ENCODE measurements at regions of chr16 and their contacts with region 1.

Region 1: GRCh38 chr16:23877107-23878090 is 41.6 kb downstream of the PRKCB start:
- DNase-seq: no peak
- ATAC-seq: no peak
- H3K4me3 Mint-ChIP-seq: no peak overlapping the region
- H3K27ac Mint-ChIP-seq: no peak overlapping the region
- H3K4me1 Mint-ChIP-seq: no peaks in the 10 kb centered on the region
- H3K27me3 Mint-ChIP-seq: peaks cover 28% of the 10 kb centered on the region
- CTCF ChIP-seq: no peak

Region 2: GRCh38 chr16:23699100-23699499 is 178.3 kb before region 1 on chr16:
- CTCF ChIA-PET with region 1: no interaction called
- POLR2A ChIA-PET with region 1: no interaction called
- DNase-seq: no peak
- ATAC-seq: no peak
- H3K4me3 Mint-ChIP-seq: no peak overlapping the region
- H3K27ac Mint-ChIP-seq: no peak overlapping the region
- H3K4me1 Mint-ChIP-seq: peaks cover 25% of the 10 kb centered on the region
- H3K27me3 Mint-ChIP-seq: peaks cover 16% of the 10 kb centered on the region
- CTCF ChIP-seq: no peak

Region 3: DNA sequence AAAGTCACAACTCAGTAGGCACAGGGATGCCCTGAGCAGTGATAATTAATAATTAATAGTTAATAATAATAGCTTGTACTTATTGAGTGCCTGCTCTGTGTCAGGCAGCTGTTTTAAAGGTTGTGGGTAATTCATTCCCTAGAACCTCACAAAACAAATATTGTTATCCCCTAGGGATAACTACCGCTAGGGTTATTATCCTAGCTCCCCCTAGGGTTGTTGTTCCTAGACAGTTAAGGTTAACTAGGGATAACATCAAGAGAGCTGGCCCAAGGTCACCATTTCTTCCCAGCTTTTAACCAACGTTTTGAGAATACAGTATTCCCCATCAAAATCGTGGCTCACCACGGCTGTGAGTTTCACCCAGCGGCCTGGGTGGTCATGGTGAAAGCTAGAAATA is 138.5 kb after region 1 on chr16:
- CTCF ChIA-PET with region 1: interaction called, 13 read pairs
- POLR2A ChIA-PET with region 1: no interaction called
- DNase-seq: no peak
- ATAC-seq: no peak
- H3K4me3 Mint-ChIP-seq: no peak overlapping the region
- H3K27ac Mint-ChIP-seq: no peak overlapping the region
- H3K4me1 Mint-ChIP-seq: 0 out of 2 replicates have a peak, but pooled peaks cover 3% of the 10 kb centered on the region
- H3K27me3 Mint-ChIP-seq: no peaks in the 10 kb centered on the region; the same call in 1 of the 2 replicates
- CTCF ChIP-seq: no peak

Region 4: DNA sequence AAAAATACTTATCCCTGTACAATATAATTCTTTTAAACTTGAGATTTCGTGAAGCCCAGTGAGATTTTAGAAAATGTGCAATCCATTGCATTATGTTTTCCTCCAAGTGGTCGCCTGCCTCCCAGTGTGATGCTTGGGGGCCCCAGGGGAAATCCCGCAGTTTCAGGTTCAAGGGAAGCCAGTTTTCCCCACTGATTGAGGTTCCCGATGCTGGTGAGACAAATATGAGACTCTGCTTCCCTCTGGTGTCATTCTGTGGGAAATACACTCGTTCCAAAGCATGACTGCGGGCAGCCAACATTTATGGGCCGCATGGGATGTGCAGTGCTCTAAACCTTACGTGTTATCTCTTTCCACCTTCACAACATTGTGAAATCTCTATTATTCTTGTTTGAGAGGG is 159.2 kb after region 1 on chr16:
- CTCF ChIA-PET with region 1: interaction called, 15 read pairs
- POLR2A ChIA-PET with region 1: no interaction called
- DNase-seq: peak; percentile 59
- ATAC-seq: peak; percentile 87
- H3K4me3 Mint-ChIP-seq: no peak overlapping the region
- H3K27ac Mint-ChIP-seq: no peak overlapping the region
- H3K4me1 Mint-ChIP-seq: peaks cover 2% of the 10 kb centered on the region; the same call in 1 of the 2 replicates
- H3K27me3 Mint-ChIP-seq: no peaks in the 10 kb centered on the region
- CTCF ChIP-seq: peak; percentile 67

Measured in WTC11 (cell line).